Spleen (tissue), 13 donors: ENCODE measurements at regions of chr12 and their contacts with region 1.

Region 1: DNA sequence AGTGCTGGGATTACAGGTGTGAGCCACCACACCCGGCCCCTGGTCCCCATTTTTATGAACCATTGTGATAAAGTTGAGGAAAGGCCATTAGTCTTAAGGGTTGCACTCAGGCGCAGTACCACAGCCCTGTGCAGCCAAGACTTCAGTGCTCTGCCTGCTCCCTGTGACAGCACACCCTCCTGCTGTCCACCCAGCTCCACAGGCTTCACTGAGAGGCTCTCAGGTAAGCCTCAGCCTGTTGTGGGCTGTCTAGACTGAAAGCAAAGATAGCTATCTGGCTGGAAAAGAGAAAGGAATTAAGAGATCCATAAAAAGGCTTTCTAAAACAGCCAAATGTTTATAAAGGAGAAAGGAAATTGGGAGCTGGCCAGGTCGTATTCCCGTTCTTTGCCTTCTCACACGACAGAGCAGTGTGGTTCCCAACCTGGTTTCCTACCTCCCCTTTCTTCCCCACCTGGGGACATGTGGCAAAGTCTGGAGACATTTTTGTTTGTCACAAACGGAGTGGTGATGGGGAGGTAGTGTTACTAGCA is 19.1 kb upstream of the DNM1L start:
- DNase-seq: no peak
- H3K4me3 ChIP-seq: no peak overlapping the region
- H3K27ac ChIP-seq: no peak overlapping the region
- H3K4me1 ChIP-seq: peaks cover 0 to 4% (median 0%) of the 10 kb centered on the region in 6 donors
- H3K27me3 ChIP-seq: no peaks in the 10 kb centered on the region
- CTCF ChIP-seq: no peak
- POLR2A ChIP-seq: no peak

Region 2: GRCh38 chr12:32365473-32366064 is 294.4 kb before region 1 on chr12:
- intact Hi-C with region 1: loop called (anchors 10 kb)
- DNase-seq: no peak
- H3K4me3 ChIP-seq: no peak overlapping the region
- H3K27ac ChIP-seq: no peak overlapping the region
- H3K4me1 ChIP-seq: no peaks in the 10 kb centered on the region
- H3K27me3 ChIP-seq: no peaks in the 10 kb centered on the region
- CTCF ChIP-seq: peak in 10 of 11 experiments; percentile 40 to 83 (median 74)
- POLR2A ChIP-seq: no peak

Region 3: GRCh38 chr12:32454075-32454474 is 205.9 kb before region 1 on chr12:
- intact Hi-C with region 1: loop called (anchors 5 kb)
- DNase-seq: no peak
- H3K4me3 ChIP-seq: no peak overlapping the region
- H3K27ac ChIP-seq: peak overlapping the region in 1 of 8 donors; percentile 1
- H3K4me1 ChIP-seq: peaks cover 0 to 43% (median 18%) of the 10 kb centered on the region in 6 donors
- H3K27me3 ChIP-seq: no peaks in the 10 kb centered on the region
- CTCF ChIP-seq: no peak
- POLR2A ChIP-seq: no peak

Region 4: GRCh38 chr12:32516230-32516629 is 143.7 kb before region 1 on chr12:
- intact Hi-C with region 1: no loop called
- DNase-seq: no peak
- H3K4me3 ChIP-seq: no peak overlapping the region
- H3K27ac ChIP-seq: peak overlapping the region in 2 of 8 donors; percentile 23 to 48
- H3K4me1 ChIP-seq: peaks cover 0 to 26% (median 5%) of the 10 kb centered on the region in 6 donors
- H3K27me3 ChIP-seq: no peaks in the 10 kb centered on the region
- CTCF ChIP-seq: no peak
- POLR2A ChIP-seq: no peak